ENCODE measurements at regions of chr7 and their contacts with region 1.

Region 1: DNA sequence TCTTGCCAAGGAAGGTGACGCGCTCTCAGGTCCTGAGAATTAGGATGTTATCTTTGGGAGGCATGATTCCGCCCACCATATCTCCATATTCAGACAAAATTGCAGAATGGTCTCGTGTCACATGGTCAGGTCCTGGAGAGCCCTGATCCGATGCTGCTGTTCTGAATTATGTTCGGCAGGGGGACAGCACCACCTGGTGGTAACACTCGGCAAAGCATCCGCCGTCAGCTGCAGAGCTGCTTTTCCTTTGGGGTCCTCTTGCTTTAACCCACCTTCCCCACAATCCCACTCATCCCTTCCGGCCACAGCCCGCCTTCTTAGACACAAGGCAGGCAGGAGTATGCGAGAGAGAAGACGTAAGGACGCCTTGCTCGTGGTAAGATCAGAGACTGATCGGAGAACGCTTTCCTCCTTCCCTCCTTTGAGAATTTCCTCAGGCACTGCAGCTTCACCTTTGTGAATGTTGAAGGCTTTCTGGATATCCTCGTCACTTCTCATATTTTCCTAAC is 327.8 kb upstream of the C7orf33 start:
- H3K4me3 ChIP-seq: no peak overlapping the region
- H3K27ac ChIP-seq: no peak overlapping the region
- H3K4me1 ChIP-seq: no peaks in the 10 kb centered on the region
- CTCF ChIP-seq: peak; percentile 94

Region 2: GRCh38 chr7:147997636-147998035 is 265.1 kb before region 1 on chr7:
- CTCF ChIA-PET with region 1: no interaction called
- POLR2A ChIA-PET with region 1: no interaction called
- H3K4me3 ChIP-seq: no peak overlapping the region
- H3K27ac ChIP-seq: no peak overlapping the region
- H3K4me1 ChIP-seq: no peaks in the 10 kb centered on the region
- CTCF ChIP-seq: no peak

Region 3: DNA sequence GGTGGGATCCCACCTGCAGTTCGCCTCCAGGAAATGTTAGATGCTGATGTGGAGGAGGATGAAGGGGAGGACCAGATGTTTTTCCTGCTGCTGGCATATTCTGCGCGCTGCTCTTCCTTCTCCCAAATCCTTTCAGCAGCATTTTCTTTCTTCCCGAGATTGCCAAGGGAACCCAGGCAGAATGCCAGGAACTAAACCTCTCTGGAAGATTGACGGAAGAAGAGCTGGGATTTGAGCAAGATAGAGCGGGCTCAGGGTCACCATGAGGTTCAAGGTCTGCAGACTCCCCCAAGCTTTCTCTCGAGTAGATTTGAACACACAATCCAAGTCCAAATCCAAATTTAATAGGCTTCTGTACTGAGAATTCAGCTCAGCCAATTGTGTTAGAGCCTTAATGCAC is 17.4 kb before region 1 on chr7:
- CTCF ChIA-PET with region 1: interaction called, 10 read pairs
- POLR2A ChIA-PET with region 1: interaction called, 3 read pairs
- H3K4me3 ChIP-seq: no peak overlapping the region
- H3K27ac ChIP-seq: no peak overlapping the region
- H3K4me1 ChIP-seq: no peaks in the 10 kb centered on the region
- CTCF ChIP-seq: no peak

Region 4: GRCh38 chr7:148527707-148528168 is 265.0 kb after region 1 on chr7:
- CTCF ChIA-PET with region 1: interaction called, 14 read pairs
- POLR2A ChIA-PET with region 1: no interaction called
- H3K4me3 ChIP-seq: no peak overlapping the region
- H3K27ac ChIP-seq: no peak overlapping the region
- H3K4me1 ChIP-seq: peaks cover 4% of the 10 kb centered on the region; the same call in 1 of the 2 replicates
- CTCF ChIP-seq: peak; percentile 69

Region 5: DNA sequence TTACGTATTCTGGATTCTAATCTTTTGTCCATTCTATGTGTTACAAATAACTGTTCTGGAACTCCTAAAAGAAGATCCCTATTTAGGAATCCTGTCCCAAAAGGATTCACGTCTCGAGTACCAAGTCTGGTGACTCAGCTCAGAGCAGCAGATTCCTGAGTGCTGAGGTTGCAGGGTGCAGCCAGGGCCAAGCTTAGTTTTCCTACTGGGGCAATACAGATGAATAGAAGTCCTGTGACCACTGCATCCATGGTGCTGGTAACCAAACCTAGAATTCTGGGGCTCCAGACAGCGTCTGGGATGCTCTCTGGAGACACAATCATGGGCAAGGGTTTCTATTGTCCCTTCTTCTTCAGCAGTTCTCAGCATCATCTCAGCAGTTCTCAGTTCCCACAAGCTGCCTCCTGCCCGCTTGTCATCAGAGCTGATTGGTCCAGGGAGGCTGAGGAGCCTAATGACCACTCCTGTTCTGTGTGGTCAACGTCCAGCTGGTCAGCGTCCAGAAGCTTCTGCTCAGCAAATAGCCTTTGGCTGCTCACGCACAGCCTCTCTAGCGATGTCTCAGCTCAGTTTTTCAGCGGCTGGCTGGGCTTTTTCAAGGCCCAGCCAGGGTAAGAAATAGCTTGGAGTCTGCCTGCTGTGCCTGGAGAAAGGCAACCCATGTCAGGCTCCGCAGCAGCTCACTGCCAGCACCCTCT is 277.4 kb after region 1 on chr7:
- CTCF ChIA-PET with region 1: no interaction called
- POLR2A ChIA-PET with region 1: no interaction called
- H3K4me3 ChIP-seq: no peak overlapping the region
- H3K27ac ChIP-seq: no peak overlapping the region
- H3K4me1 ChIP-seq: no peaks in the 10 kb centered on the region
- CTCF ChIP-seq: no peak